GM10248 (cell line): ENCODE measurements at regions of chr5 and their contacts with region 1.

Region 1: DNA sequence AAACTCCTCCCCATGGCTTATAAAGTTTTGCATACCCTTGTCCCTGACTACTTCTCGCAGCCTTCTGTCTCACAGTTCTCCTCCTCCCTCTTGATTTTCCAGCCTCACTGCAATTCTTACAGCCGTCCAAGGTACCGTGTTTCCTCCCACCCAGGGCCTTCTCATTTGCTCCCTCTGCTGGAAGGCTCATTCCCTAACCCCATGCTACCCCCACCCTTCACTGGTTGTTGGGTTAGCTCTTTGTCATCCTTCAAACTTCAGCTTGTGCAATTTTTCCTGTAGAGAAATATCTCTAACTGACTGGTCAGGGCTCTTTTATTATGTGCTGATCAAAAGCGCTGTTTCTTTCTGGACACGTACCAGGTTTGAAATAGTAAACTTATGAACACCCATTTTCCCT is 329.2 kb downstream of the EBF1 start:
- DNase-seq: peak; percentile 8
- CTCF ChIP-seq: peak; percentile 23

Region 2: GRCh38 chr5:158758675-158759074 is 11.8 kb before region 1 on chr5:
- CTCF ChIA-PET with region 1: interaction called, 10 read pairs
- POLR2A ChIA-PET with region 1: no interaction called
- DNase-seq: no peak
- CTCF ChIP-seq: no peak

Region 3: DNA sequence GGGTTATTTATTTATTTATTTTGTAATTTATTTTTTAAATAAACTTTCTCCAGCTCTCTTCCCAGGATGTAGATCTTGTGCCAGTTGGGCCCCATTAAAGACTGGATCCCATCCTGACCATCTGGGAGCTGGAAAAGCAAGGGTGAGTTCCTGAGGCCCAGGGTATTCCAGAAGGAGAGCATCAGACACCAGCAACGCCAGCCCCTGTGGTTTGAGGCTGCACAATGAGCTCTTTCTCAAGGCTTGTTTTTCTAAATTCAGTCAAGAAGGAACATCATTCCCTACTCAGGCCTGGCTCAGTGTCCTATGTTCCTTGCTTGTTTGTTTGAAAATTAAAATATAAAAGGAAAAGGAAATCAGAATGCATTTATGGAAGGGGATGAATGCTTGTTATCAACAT is 15.9 kb after region 1 on chr5:
- CTCF ChIA-PET with region 1: interaction called, 11 read pairs
- POLR2A ChIA-PET with region 1: no interaction called
- DNase-seq: no peak
- CTCF ChIP-seq: no peak